ENCODE measurements at regions of chr7 and their contacts with region 1.

Region 1: DNA sequence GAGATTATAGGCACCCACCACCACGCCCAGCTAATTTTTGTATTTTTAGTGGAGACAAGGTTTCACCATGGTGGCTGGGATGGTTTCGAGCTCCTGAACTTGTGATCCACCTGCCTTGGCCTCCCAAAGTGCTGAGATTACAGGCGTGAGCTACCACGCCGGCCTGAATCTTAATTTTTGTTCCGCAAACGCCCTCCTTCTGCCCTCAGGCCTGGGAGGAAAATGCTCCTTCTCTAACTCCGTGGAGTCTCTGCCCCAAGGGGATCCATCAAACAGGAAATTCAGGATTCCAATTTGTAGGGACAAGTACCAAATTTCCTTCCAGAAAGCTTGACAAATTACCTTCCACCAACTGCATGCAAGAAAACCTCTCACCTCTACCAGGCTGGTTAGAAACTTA is 43.2 kb downstream of the RBAK start:
- DNase-seq: peak in 1 of 10 donors; percentile 4
- H3K4me3 ChIP-seq: no peak overlapping the region
- H3K27ac ChIP-seq: no peak overlapping the region
- H3K27me3 ChIP-seq: peaks cover 0 to 12% (median 0%) of the 10 kb centered on the region in 45 donors
- CTCF ChIP-seq: no peak

Region 2: GRCh38 chr7:4797858-4798705 is 290.8 kb before region 1 on chr7:
- intact Hi-C with region 1: loop called (anchors 2 to 5 kb)
- DNase-seq: peak in 7 of 10 donors; percentile 21 to 79 (median 49)
- H3K4me3 ChIP-seq: peak overlapping the region in 1 of 59 donors; percentile 6
- H3K27ac ChIP-seq: peak overlapping the region in 8 of 59 donors; percentile 9 to 57 (median 36)
- H3K27me3 ChIP-seq: no peaks in the 10 kb centered on the region
- CTCF ChIP-seq: peak; percentile 60 to 98 (median 88)

Region 3: GRCh38 chr7:4849369-4849768 is 239.5 kb before region 1 on chr7:
- intact Hi-C with region 1: loop called (anchors 2 to 10 kb)
- DNase-seq: peak in 4 of 10 donors; percentile 23 to 52 (median 46)
- H3K4me3 ChIP-seq: no peak overlapping the region
- H3K27ac ChIP-seq: no peak overlapping the region
- H3K27me3 ChIP-seq: no peaks in the 10 kb centered on the region
- CTCF ChIP-seq: peak in 51 of 56 donors; percentile 32 to 71 (median 51)

Region 4: GRCh38 chr7:5333121-5334045 is 244.5 kb after region 1 on chr7:
- intact Hi-C with region 1: no loop called
- DNase-seq: no peak
- H3K4me3 ChIP-seq: no peak overlapping the region
- H3K27ac ChIP-seq: no peak overlapping the region
- H3K27me3 ChIP-seq: no peaks in the 10 kb centered on the region
- CTCF ChIP-seq: no peak